Endothelial cell of umbilical vein (primary cell): ENCODE measurements at regions of chr3 and their contacts with region 1.

Region 1: GRCh38 chr3:178385280-178385952 is 150.8 kb upstream of the KCNMB2 start:
- DNase-seq: peak; percentile 71
- H3K4me3 ChIP-seq: no peak overlapping the region
- H3K27ac ChIP-seq: no peak overlapping the region
- H3K4me1 ChIP-seq: peaks cover 35% of the 10 kb centered on the region
- H3K27me3 ChIP-seq: no peaks in the 10 kb centered on the region
- CTCF ChIP-seq: peak; percentile 53 to 77
- POLR2A ChIP-seq: no peak

Region 2: GRCh38 chr3:176872771-176873209 is 1512.6 kb before region 1 on chr3:
- CTCF ChIA-PET with region 1: interaction called, 66 read pairs
- POLR2A ChIA-PET with region 1: no interaction called
- dilution Hi-C with region 1: no loop called
- intact Hi-C with region 1: loop called (anchors 1 kb)
- DNase-seq: peak; percentile 61
- H3K4me3 ChIP-seq: no peak overlapping the region
- H3K27ac ChIP-seq: no peak overlapping the region
- H3K4me1 ChIP-seq: no peaks in the 10 kb centered on the region
- H3K27me3 ChIP-seq: no peaks in the 10 kb centered on the region
- CTCF ChIP-seq: peak; percentile 79 to 81
- POLR2A ChIP-seq: no peak

Region 3: DNA sequence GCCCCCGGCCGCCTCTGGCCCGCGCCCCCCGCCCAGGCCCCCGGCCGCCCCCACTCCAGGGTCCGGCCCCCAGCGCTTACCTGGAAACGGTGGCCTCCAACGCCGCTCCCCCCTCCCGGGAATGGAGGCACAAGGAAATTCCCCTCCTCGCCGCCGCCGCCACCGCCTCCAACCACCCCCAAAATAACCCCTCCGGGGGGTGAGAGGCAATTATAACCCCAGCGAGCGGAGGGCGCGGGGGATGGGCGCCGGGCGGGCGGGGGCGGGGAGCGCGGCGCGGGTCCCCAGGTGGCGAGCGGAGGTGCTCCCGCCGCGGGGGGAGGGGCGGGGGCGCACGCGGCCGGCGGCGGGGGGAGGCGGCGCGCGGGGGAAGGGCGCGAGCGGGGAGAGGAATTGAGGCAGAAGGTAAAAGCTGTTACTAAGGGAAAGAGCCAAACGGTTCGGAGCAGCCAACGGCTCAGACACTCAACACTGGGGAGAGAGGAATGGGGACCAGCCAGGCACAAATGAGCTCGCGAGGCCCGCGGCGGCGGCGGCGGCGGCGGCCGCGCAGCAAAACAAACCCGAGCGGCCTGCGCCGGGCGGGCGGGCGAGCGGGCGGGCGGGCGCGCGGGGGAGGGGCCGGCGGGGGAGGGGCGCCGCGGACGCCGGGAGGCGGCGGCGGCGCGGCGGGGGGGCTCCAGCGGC is 1188.2 kb before region 1 on chr3 and contains the start of gene TBL1XR1:
- CTCF ChIA-PET with region 1: interaction called, 5 read pairs
- POLR2A ChIA-PET with region 1: no interaction called
- dilution Hi-C with region 1: no loop called
- intact Hi-C with region 1: loop called (anchors 1 kb)
- DNase-seq: peak; percentile 91
- H3K4me3 ChIP-seq: peak within 1 kb of the TSS; percentile 84 to 97 (median 95)
- H3K27ac ChIP-seq: peak within 1 kb of the TSS; percentile 93
- H3K4me1 ChIP-seq: peaks cover 32% of the 10 kb centered on the region
- H3K27me3 ChIP-seq: no peaks in the 10 kb centered on the region
- CTCF ChIP-seq: no peak
- POLR2A ChIP-seq: no peak
- total RNA-seq, gene TBL1XR1: 146 and 152 TPM in 2 replicates

Region 4: GRCh38 chr3:177679568-177680441 is 705.6 kb before region 1 on chr3:
- CTCF ChIA-PET with region 1: no interaction called
- POLR2A ChIA-PET with region 1: no interaction called
- dilution Hi-C with region 1: no loop called
- intact Hi-C with region 1: loop called (anchors 5 kb)
- DNase-seq: peak; percentile 76
- H3K4me3 ChIP-seq: no peak overlapping the region
- H3K27ac ChIP-seq: peak overlapping the region; percentile 72
- H3K4me1 ChIP-seq: peaks cover 45% of the 10 kb centered on the region
- H3K27me3 ChIP-seq: no peaks in the 10 kb centered on the region
- CTCF ChIP-seq: no peak
- POLR2A ChIP-seq: no peak

Region 5: DNA sequence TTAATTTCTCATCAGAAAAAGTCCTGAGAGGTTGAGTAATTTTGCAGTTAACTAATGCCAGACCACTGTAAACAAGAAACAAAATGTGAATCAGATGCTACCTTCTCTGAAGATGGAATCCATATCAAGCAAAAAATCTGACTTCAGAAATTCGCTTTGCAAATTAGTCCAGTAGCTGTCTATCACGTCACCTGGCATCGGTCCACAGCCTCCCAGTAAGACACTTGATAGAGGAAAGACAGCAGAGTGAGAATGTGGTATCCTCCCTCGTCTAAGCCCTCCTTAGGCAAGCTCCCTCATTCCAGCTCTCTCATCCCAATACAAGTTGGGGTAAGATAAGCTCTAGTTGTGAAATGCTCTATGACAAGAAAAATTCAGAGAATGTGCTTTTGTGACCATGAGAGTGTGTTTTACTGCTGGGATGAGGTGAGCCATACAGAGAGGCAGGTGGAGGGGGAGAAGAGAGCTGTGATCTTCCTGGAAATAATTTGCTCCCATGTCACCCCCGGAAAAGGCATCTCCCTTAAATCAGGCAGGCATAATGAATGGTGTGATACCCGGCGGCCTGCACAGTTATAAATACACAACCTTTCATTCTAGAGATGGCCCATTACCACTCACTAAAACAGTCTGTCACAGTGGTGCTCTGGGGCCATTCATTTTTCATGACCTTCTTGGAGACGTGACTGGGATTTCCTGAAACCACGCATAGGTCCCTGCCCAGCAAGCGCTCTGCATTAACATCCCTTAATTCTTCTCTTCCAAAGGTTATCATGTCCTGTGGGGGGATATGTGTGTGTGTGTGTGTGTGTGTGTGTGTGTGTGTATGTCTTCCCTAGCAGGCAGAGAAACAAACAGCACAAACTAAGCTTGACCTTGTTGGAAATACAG is 451.2 kb before region 1 on chr3:
- CTCF ChIA-PET with region 1: interaction called, 6 read pairs
- POLR2A ChIA-PET with region 1: no interaction called
- dilution Hi-C with region 1: no loop called
- intact Hi-C with region 1: loop called (anchors 1 kb)
- DNase-seq: peak; percentile 12
- H3K4me3 ChIP-seq: no peak overlapping the region
- H3K27ac ChIP-seq: no peak overlapping the region
- H3K4me1 ChIP-seq: peaks cover 21% of the 10 kb centered on the region
- H3K27me3 ChIP-seq: no peaks in the 10 kb centered on the region
- CTCF ChIP-seq: no peak
- POLR2A ChIP-seq: no peak

Region 6: DNA sequence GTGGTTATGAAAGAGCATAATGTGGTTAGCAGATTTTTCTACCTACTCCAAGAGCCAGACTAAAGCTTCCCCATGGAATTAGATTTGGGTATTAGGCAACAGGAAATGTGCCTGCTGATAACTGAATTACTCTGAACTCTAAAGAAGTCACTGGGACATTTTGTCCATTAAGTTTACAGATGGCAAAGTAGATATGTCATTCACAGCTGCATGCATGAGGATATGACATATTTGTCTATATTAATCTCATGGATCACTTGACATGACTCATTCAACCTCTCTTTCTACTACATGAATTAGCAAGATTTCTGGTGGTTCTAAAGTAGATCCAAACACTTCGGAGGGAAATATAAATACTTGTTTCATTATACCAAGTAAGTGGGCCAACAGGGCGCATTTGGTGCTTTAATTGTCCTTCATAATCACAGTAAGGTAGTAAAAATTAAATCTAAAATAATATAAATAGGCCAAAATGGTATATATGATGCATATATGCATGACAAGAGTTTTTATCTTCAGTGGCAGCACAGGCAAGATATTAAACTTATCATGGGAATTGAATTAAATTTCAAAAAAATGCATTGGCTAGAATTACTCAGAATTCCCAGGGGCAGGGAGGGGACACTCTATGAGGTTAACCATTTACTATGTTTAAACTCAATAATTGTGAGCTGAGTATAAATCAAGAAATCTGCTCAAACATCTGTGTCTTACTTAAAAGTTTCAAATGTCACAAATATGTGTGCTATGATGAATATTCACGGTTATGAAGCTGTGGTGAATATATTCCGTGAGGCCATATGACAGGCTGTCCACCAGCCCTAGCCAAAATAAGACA is 214.5 kb before region 1 on chr3:
- CTCF ChIA-PET with region 1: interaction called, 5 read pairs
- POLR2A ChIA-PET with region 1: no interaction called
- dilution Hi-C with region 1: no loop called
- intact Hi-C with region 1: loop called (anchors 1 kb)
- DNase-seq: peak; percentile 96
- H3K4me3 ChIP-seq: no peak overlapping the region
- H3K27ac ChIP-seq: peak overlapping the region; percentile 85
- H3K4me1 ChIP-seq: peaks cover 27% of the 10 kb centered on the region
- H3K27me3 ChIP-seq: no peaks in the 10 kb centered on the region
- CTCF ChIP-seq: no peak
- POLR2A ChIP-seq: peak; percentile 91